RWPE1 (cell line): ENCODE measurements at regions of chr6 and their contacts with region 1.

Region 1: GRCh38 chr6:13212096-13212495 is 116.2 kb downstream of the TBC1D7 start:
- DNase-seq: no peak
- H3K27ac ChIP-seq: no peak overlapping the region
- CTCF ChIP-seq: no peak

Region 2: DNA sequence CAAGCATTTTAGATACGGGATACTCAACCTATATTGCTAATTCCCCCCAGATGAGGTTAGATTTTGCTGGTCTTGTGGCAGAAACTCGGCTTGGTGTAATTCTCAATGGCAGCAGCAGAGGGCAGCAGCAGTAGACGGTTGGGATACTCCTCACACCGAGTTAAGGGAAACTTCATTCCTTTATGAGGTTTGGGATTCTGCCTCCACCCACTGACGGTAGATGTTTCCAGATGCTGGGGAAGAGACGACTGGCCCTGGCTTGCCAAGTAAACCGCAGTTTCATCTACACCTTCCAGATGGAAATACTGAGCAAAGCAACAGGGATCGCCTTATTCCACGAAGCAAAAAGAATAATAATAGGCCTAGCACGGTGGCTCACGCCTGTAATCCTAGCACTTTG is 124.5 kb after region 1 on chr6:
- CTCF ChIA-PET with region 1: interaction called, 15 read pairs
- POLR2A ChIA-PET with region 1: no interaction called
- DNase-seq: peak; percentile 80
- H3K27ac ChIP-seq: peak overlapping the region; percentile 65
- CTCF ChIP-seq: peak; percentile 90